Dendritic cell treated with granulocyte-macrophage colony-stimulating factor and Interleukin-4, amounts not matched to agents 40 ng/mL and 50 ng/mL, for 4 days (primary cell): ENCODE measurements at regions of chr2 and their contacts with region 1.

Region 1: GRCh38 chr2:40352041-40352702 is 99.7 kb downstream of the SLC8A1 start:
- H3K4me3 Mint-ChIP-seq: no peak overlapping the region
- H3K27ac Mint-ChIP-seq: peak overlapping the region; percentile 78
- H3K4me1 Mint-ChIP-seq: peaks cover 51% of the 10 kb centered on the region
- H3K27me3 Mint-ChIP-seq: no peaks in the 10 kb centered on the region

Region 2: DNA sequence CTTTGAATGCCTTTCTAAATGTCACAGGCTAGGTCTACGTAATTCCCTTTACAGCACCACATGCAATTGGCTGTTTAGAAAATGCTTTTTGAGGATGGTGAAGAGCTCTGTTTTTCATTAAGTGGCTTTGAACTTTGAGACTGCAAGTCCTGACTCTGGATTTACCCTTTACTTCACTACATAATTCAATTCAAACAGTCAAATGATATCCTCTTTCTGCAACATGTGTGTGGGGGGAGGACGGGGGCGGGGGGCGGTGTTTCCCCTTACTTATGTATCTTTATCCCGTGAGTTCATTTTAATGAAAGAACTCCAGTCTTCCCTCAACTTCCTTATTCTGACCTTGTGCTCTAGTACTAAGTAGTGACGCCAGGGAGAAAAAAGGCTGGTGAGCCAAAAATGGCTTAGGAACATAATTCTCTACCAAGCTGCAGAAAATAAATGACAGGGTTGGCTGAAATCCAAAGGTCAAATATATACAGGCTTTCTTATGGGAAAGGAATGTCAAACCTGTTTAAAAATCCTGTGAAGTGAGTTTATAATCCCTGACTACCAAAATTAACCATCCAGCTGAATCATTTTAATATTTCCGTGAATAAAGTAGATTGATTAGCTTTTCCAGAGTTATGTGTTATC is 19.9 kb before region 1 on chr2:
- intact Hi-C with region 1: no loop called
- H3K4me3 Mint-ChIP-seq: no peak overlapping the region
- H3K27ac Mint-ChIP-seq: no peak overlapping the region
- H3K4me1 Mint-ChIP-seq: peaks cover 28% of the 10 kb centered on the region
- H3K27me3 Mint-ChIP-seq: no peaks in the 10 kb centered on the region

Region 3: DNA sequence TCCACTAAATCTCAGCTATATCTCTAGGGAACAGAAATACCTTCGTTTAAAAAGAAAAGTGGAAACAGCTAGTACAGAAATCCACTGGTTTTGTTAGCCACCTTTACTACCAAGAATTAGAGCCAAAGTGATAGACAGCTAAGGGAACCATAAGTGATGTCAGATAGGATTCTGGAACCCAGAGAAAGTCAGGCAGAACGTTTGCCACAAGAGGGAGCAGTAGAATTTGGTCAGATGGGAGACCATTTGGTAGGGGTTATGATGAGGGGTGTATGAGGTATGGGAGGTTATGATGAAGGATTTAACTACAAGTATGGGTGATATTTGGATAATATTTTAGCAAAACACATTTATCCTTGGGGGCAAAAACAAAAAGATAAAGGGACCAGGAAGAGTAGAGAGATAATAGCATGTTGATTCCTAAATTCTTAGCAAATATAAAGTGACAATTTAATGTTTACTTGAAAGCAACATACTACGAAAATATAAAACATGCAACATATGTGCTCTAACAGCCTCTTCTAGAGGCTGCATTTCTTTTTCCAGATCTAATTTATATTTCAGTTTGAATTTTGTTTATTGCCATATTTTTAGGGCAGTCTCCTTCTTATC is 96.4 kb after region 1 on chr2:
- intact Hi-C with region 1: loop called (anchors 10 kb)
- H3K4me3 Mint-ChIP-seq: no peak overlapping the region
- H3K27ac Mint-ChIP-seq: no peak overlapping the region
- H3K4me1 Mint-ChIP-seq: peaks cover 74% of the 10 kb centered on the region
- H3K27me3 Mint-ChIP-seq: no peaks in the 10 kb centered on the region